ENCODE measurements at regions of chr6 and their contacts with region 1.

Region 1: GRCh38 chr6:111462770-111463391 is 20.1 kb downstream of the REV3L start:
- DNase-seq: no peak
- H3K4me3 Mint-ChIP-seq: no peak overlapping the region
- H3K27ac Mint-ChIP-seq: no peak overlapping the region
- H3K4me1 Mint-ChIP-seq: peaks cover 18% of the 10 kb centered on the region
- H3K27me3 Mint-ChIP-seq: no peaks in the 10 kb centered on the region
- CTCF ChIP-seq: no peak

Region 2: GRCh38 chr6:110981202-110981600 is 481.7 kb before region 1 on chr6:
- CTCF ChIA-PET with region 1: no interaction called
- intact Hi-C with region 1: no loop called
- DNase-seq: no peak
- H3K4me3 Mint-ChIP-seq: peak overlapping the region; percentile 98
- H3K27ac Mint-ChIP-seq: peak overlapping the region; percentile 99
- H3K4me1 Mint-ChIP-seq: peaks cover 21% of the 10 kb centered on the region
- H3K27me3 Mint-ChIP-seq: no peaks in the 10 kb centered on the region
- CTCF ChIP-seq: no peak

Region 3: GRCh38 chr6:111427341-111428116 is 35.4 kb before region 1 on chr6:
- CTCF ChIA-PET with region 1: no interaction called
- intact Hi-C with region 1: loop called (anchors 5 kb)
- DNase-seq: peak; percentile 14
- H3K4me3 Mint-ChIP-seq: peak overlapping the region; percentile 38
- H3K27ac Mint-ChIP-seq: peak overlapping the region; percentile 48
- H3K4me1 Mint-ChIP-seq: peaks cover 36% of the 10 kb centered on the region
- H3K27me3 Mint-ChIP-seq: no peaks in the 10 kb centered on the region
- CTCF ChIP-seq: no peak